ENCODE measurements at regions of chr9 and their contacts with region 1.

Region 1: DNA sequence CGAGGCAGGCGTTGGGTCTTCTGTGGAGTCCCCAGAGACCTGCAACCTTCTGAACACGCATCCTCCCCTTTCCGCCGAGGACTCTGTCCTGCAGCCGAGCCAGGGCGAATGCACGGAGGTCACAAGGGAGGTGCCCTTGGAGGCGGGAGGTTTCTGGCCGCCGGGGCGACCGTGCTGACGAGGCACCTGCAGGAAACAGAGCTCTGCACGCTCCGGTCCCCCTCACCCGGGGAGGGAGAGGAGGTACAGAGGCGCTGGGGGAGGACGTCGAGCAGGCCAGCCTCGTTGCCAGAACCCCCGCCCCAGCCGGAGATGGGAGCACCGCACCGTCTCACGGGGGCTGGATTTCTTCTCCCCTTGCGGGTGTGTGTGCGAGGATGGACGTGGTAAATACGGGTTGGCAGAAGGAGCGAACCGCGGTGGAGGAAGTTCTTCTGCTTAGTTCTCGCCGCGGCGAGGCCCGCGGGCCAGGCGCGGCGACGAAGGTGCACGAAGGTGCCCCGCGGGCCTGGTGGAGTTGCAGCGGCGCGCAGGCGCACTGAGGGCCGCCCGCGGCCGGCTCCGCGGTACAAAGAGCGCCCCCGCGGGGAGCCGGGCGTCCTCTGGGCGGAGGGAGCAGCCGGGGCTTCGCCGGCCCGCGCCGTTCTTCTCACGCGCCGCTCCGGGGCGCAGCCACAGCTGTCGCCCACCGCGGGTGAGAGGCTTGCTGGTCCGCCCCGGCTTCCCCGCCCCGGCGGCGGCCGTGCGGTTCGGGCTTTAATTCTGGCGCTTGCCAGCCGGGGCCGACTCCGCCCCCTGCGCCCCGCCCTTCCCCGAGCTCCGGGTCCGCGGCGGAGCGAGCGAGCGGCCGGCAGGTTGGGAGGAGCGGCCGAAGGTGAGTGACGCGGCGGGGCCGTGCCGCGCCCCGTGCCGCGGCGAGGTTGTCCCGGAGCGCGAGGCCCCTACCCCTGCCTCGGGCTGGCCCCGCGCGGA is 289.5 kb downstream of the DOCK8 start:
- DNase-seq: peak; percentile 46 to 81
- H3K4me3 ChIP-seq: peak within 1 kb of the TSS; percentile 58; the same call in 1 of the 2 replicates
- H3K27ac ChIP-seq: no peak within 1 kb of the TSS
- H3K4me1 ChIP-seq: 0 out of 2 replicates have a peak, but pooled peaks cover 7% of the 10 kb centered on the region
- H3K27me3 ChIP-seq: no peaks in the 10 kb centered on the region
- CTCF ChIP-seq: no peak; the same call in 1 of the 2 replicates

Region 2: DNA sequence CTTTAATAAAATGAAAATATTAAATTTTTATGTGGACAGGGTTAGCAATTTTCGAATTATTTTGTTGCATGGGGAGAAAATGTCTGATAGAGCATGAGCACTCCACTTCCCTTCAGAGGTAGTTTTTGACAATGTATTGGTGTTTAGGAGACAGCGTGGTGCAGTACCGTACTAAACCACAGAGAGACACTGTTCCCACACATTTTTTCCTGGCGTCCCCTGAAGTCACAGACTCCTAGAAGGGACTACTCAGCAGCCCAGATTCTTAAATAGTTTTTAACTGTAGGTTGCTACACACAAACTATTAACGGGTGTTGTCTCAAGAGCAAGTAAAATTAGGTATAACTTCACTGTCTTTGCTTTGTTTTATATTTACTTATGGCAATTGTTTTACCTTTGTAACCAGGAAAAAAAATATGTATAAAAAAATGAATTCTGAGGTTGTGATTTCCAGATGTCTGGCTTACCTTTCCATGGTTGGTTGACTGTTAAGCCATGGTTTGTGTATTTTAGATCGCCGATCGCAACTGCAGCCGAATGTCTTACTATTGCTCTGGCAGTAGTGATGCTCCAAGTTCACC is 118.3 kb before region 1 on chr9:
- CTCF ChIA-PET with region 1: no interaction called
- POLR2A ChIA-PET with region 1: no interaction called
- intact Hi-C with region 1: loop called (anchors 2 kb)
- DNase-seq: peak; percentile 47 to 52
- H3K4me3 ChIP-seq: no peak overlapping the region
- H3K27ac ChIP-seq: no peak overlapping the region
- H3K4me1 ChIP-seq: no peaks in the 10 kb centered on the region
- H3K27me3 ChIP-seq: no peaks in the 10 kb centered on the region
- CTCF ChIP-seq: peak; percentile 93

Region 3: GRCh38 chr9:515665-516064 is 11.5 kb after region 1 on chr9:
- CTCF ChIA-PET with region 1: no interaction called
- POLR2A ChIA-PET with region 1: interaction called, 11 read pairs
- intact Hi-C with region 1: no loop called
- DNase-seq: no peak
- H3K4me3 ChIP-seq: no peak overlapping the region
- H3K27ac ChIP-seq: no peak overlapping the region
- H3K4me1 ChIP-seq: no peaks in the 10 kb centered on the region
- H3K27me3 ChIP-seq: no peaks in the 10 kb centered on the region
- CTCF ChIP-seq: no peak

Region 4: DNA sequence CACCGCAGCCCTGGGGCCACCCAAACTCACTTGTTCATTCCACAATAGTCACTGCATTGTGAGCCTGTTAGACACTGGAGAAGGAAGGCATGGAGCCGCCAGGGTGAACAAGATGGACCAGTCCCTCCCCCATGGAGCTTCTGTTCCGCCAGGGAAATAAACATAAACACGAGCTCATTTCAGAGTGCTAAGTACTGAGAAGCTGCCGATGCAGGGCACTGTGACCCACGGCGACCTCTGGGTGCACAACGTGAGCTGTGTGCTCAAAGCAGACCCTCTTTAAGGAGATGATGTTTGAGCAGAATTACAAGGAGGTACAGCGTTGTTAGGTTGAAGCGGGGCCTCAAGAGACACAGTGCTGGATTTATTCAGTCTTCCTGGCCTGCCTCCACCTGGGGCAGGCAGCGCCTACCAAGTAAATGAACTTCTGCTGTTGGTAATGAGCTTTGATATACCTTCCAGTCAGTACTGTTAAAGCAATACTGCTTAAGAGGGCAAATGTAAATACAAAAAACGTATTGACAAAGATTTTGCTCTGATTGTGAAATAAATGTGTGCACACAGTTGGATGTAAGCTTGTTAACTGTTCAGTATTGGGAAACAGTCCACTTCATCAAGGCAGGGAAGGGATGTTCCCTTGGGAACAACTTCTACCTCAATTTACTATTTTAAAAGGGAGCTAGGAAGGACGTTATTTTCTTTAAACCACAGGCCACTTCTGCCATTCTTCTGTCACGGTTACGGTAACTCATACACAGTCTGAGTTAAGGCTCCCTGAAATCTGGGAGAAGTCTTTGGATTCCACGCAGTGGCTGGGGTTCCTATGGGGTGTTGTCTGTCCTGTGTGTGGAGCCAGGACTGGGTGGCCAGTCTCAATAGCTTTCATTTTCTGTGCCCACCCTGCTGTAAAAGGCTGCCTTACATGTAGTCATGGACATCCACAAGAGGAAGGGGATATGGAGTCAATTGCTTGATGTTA is 288.4 kb after region 1 on chr9:
- CTCF ChIA-PET with region 1: interaction called, 20 read pairs
- POLR2A ChIA-PET with region 1: no interaction called
- intact Hi-C with region 1: no loop called
- DNase-seq: no peak
- H3K4me3 ChIP-seq: no peak overlapping the region
- H3K27ac ChIP-seq: no peak overlapping the region
- H3K4me1 ChIP-seq: no peaks in the 10 kb centered on the region
- H3K27me3 ChIP-seq: no peaks in the 10 kb centered on the region
- CTCF ChIP-seq: no peak

Region 5: GRCh38 chr9:811106-811531 is 307.0 kb after region 1 on chr9:
- CTCF ChIA-PET with region 1: no interaction called
- POLR2A ChIA-PET with region 1: no interaction called
- intact Hi-C with region 1: no loop called
- DNase-seq: peak; percentile 14 to 59
- H3K4me3 ChIP-seq: no peak overlapping the region
- H3K27ac ChIP-seq: no peak overlapping the region
- H3K4me1 ChIP-seq: no peaks in the 10 kb centered on the region
- H3K27me3 ChIP-seq: no peaks in the 10 kb centered on the region
- CTCF ChIP-seq: no peak